Activated CD4-positive, alpha-beta T cell treated with anti-CD3 and anti-CD28 coated beads, Interleukin-2, amount 10 ng/mL, durations not matched to agents 24 days and 14 days (primary cell): ENCODE measurements at regions of chr9 and their contacts with region 1.

Region 1: GRCh38 chr9:72280913-72281500 is 84.0 kb downstream of the ZFAND5 start:
- DNase-seq: peak; percentile 90
- H3K4me3 Mint-ChIP-seq: no peak overlapping the region
- H3K27ac Mint-ChIP-seq: no peak overlapping the region
- H3K4me1 Mint-ChIP-seq: no peaks in the 10 kb centered on the region
- H3K27me3 Mint-ChIP-seq: peaks cover 11% of the 10 kb centered on the region

Region 2: DNA sequence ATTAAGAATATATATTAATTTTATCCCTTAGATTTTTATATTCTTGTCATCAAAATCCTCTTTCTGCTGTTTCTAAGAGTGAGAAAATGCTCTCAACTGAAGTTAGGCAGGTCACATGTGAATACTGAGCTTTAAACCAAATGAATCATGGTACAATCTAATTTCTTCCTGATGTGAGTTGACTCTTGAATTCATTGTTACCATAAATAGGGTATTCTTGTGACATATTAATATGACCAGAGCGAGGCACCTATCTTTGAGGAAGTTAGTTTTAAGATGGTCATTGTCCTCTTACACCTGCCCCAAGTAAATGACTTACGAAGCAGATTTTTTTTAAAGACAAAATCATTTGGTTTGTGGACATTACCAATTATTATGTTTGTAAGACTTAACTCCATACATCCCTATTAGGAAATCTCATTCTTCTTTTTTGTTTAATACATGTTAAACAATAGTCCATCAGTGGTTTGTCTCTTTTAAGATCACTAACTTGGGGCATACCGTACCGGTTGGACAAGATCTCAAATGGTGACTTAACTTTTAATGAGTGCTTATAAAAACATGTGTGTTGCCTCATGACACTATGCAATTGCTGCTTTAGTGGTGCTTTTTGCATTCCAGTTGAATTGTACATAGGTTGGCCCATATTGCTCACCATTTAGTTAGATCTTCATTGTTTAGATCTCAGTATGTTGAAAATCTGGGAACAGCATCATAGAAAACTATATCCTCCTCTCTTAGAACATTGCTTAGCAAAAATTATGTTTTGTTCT is 352.0 kb before region 1 on chr9:
- intact Hi-C with region 1: no loop called
- DNase-seq: no peak
- H3K4me3 Mint-ChIP-seq: no peak overlapping the region
- H3K27ac Mint-ChIP-seq: no peak overlapping the region
- H3K4me1 Mint-ChIP-seq: no peaks in the 10 kb centered on the region
- H3K27me3 Mint-ChIP-seq: no peaks in the 10 kb centered on the region

Region 3: GRCh38 chr9:72247549-72247948 is 33.5 kb before region 1 on chr9:
- intact Hi-C with region 1: no loop called
- DNase-seq: no peak
- H3K4me3 Mint-ChIP-seq: no peak overlapping the region
- H3K27ac Mint-ChIP-seq: no peak overlapping the region
- H3K4me1 Mint-ChIP-seq: no peaks in the 10 kb centered on the region
- H3K27me3 Mint-ChIP-seq: peaks cover 11% of the 10 kb centered on the region

Region 4: DNA sequence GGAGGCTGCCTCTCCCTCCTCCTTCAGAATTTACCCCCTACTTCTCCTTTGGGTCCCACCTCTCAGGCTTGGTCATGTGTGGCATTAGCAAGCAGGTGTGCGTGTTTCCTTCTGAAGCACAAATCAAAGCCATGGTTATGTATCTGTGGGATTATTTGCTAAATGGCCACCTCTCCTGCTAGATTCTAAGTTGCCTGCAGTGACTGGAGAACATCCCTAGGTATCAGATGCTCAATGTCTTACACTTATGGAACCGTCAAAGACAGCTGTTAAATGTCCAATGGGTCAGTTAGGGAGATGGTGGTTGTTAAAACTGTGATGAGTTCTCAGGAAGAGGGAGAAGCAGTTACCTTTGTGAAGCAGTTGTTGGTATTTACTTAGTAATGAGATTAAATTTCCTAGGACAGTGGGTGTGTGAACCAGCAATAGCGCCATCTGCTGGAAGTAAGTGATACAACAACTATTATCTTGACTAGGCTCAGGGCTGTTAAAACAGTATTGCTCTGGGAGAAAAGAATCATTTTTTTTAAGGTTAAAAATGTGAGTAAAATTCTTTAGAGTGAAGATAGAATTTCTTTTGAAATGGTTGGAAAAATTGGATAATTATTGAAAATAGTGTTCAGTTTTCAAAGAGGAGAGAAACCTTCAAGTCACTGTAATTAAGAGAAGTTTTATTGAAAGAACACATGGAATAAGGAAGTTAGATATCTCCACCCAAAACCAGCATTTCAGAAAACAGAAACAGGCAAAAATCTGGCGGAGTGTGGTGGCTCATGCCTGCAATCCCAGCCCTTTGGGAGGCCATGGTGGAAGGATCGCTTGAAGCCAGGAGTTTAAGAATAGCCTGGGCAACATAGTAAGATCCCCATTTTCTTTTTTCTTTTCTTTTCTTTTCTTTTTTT is 311.7 kb after region 1 on chr9:
- intact Hi-C with region 1: loop called (anchors 1 kb)
- DNase-seq: peak; percentile 79
- H3K4me3 Mint-ChIP-seq: no peak overlapping the region
- H3K27ac Mint-ChIP-seq: no peak overlapping the region
- H3K4me1 Mint-ChIP-seq: peaks cover 45% of the 10 kb centered on the region
- H3K27me3 Mint-ChIP-seq: peaks cover 8% of the 10 kb centered on the region

Region 5: DNA sequence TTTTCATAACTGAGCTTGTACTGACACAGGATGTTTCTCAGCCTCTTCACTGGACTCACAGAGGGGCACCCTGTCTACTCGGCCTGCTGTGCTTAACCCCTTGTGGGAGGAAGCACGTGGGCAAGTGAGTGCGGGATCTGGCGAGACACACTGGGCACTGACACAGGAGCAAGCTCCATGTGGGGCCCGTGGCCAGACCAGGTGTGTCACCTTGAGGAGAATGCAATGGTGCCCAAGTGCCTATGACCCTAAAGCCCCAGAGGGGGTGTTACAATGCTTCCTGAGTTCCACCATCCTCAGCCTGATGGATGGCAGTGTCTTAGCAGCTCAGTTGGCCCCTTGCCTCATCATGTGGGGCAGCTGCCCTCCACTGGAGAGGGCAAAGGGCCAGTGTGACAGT is 543.0 kb after region 1 on chr9:
- intact Hi-C with region 1: loop called (anchors 2 kb)
- DNase-seq: no peak
- H3K4me3 Mint-ChIP-seq: no peak overlapping the region
- H3K27ac Mint-ChIP-seq: no peak overlapping the region
- H3K4me1 Mint-ChIP-seq: no peaks in the 10 kb centered on the region
- H3K27me3 Mint-ChIP-seq: peaks cover 4% of the 10 kb centered on the region

Region 6: GRCh38 chr9:73023025-73023541 is 742.1 kb after region 1 on chr9:
- intact Hi-C with region 1: loop called (anchors 2 kb)
- DNase-seq: peak; percentile 79
- H3K4me3 Mint-ChIP-seq: no peak overlapping the region
- H3K27ac Mint-ChIP-seq: no peak overlapping the region
- H3K4me1 Mint-ChIP-seq: peaks cover 7% of the 10 kb centered on the region
- H3K27me3 Mint-ChIP-seq: peaks cover 23% of the 10 kb centered on the region

Region 7: GRCh38 chr9:73081979-73082657 is 801.1 kb after region 1 on chr9:
- intact Hi-C with region 1: loop called (anchors 1 kb)
- DNase-seq: no peak
- H3K4me3 Mint-ChIP-seq: no peak overlapping the region
- H3K27ac Mint-ChIP-seq: no peak overlapping the region
- H3K4me1 Mint-ChIP-seq: no peaks in the 10 kb centered on the region
- H3K27me3 Mint-ChIP-seq: peaks cover 19% of the 10 kb centered on the region